ENCODE measurements at regions of chr1 and their contacts with region 1.

Region 1: DNA sequence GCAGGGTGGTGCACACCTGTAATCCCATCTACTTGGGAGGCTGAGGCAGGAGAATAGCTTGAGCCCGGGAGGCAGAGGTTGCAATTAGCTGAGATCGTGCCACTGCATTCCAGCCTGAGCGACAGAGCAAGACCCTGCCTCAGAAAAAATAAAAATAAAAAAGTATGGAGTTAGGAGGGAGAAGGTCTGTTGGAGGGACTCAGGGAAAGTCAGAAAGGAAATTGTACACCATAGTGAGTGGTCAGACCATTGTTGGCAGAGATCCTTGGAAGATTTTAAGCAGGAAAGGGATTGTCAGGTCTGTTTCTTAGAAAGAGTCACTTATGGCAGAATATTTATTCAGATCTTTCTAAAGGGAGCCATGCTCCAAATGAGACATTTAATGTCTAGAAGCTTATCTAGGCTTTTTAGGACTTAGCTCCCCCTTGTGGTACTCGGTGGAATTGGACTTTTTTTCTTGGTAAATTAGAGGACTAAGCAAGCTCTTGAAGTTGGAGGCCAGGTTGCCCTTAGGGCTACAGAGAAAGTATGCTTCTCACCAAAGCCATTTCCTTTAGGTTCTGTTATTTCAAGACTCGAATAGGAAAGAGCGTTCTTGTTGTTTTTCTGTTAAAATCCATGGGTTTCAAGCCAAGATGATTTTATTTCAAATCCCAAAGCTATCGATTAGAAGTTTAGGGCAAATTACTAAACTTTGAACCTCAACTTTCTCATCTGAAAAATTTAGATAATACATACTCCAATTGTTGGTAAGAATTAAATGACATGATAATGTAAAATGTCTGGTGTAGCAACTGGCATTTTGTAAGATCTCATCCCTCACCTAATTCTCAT is 16.5 kb downstream of the MIA3 start:
- DNase-seq: peak; percentile 65
- CTCF ChIP-seq: peak; percentile 80

Region 2: GRCh38 chr1:221777431-221778072 is 856.8 kb before region 1 on chr1:
- CTCF ChIA-PET with region 1: no interaction called
- POLR2A ChIA-PET with region 1: no interaction called
- DNase-seq: peak; percentile 64
- CTCF ChIP-seq: no peak

Region 3: GRCh38 chr1:222314839-222315238 is 319.6 kb before region 1 on chr1:
- CTCF ChIA-PET with region 1: no interaction called
- POLR2A ChIA-PET with region 1: no interaction called
- DNase-seq: no peak
- CTCF ChIP-seq: no peak

Region 4: GRCh38 chr1:222465211-222466041 is 169.0 kb before region 1 on chr1:
- CTCF ChIA-PET with region 1: interaction called, 65 read pairs
- POLR2A ChIA-PET with region 1: no interaction called
- DNase-seq: peak; percentile 90
- CTCF ChIP-seq: peak; percentile 100

Region 5: GRCh38 chr1:222582099-222582774 is 52.2 kb before region 1 on chr1:
- CTCF ChIA-PET with region 1: interaction called, 10 read pairs
- POLR2A ChIA-PET with region 1: no interaction called
- DNase-seq: peak; percentile 11
- CTCF ChIP-seq: no peak

Region 6: DNA sequence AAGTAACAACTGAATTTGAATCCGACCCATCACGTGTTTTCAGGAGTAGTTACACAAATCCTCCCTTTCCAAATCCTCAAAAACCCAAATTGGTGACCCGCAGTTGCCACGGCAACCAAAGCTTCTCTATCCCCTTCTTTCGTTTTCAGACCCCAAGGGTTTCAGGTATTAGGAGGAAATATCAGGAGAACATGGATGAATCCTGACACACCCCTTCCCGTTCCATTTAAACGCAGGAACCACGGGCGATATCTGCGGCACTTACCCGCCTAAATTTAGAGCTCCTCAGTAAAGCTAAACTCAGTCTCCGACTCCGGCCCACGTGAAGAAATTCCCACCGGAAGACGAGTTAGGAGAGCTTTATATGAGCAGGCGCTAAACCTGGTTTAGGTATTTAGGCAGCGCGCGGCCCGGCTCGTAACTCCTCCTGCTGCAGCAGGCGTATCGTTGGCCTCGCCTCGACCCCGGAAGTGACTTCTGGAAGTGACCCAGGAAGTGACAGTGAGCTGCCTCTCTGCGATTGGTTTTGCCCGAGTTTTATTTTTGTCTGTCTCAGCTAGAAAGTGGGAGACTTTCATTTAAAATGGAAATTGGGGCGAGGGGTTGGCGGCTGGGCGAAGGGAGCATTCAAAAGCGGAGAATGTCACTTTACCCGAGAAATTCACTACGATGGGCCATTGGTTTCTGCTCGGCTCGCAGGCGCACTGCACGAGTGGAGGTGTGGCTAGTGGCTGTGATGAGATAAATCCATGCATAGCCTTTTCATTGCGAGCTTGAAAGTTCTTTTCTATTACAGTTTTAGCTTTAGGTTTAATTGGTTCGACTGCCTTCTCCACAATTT is 44.7 kb before region 1 on chr1 and contains the start of gene TAF1A:
- CTCF ChIA-PET with region 1: interaction called, 14 read pairs
- POLR2A ChIA-PET with region 1: no interaction called
- DNase-seq: peak; percentile 88
- CTCF ChIP-seq: no peak

Region 7: DNA sequence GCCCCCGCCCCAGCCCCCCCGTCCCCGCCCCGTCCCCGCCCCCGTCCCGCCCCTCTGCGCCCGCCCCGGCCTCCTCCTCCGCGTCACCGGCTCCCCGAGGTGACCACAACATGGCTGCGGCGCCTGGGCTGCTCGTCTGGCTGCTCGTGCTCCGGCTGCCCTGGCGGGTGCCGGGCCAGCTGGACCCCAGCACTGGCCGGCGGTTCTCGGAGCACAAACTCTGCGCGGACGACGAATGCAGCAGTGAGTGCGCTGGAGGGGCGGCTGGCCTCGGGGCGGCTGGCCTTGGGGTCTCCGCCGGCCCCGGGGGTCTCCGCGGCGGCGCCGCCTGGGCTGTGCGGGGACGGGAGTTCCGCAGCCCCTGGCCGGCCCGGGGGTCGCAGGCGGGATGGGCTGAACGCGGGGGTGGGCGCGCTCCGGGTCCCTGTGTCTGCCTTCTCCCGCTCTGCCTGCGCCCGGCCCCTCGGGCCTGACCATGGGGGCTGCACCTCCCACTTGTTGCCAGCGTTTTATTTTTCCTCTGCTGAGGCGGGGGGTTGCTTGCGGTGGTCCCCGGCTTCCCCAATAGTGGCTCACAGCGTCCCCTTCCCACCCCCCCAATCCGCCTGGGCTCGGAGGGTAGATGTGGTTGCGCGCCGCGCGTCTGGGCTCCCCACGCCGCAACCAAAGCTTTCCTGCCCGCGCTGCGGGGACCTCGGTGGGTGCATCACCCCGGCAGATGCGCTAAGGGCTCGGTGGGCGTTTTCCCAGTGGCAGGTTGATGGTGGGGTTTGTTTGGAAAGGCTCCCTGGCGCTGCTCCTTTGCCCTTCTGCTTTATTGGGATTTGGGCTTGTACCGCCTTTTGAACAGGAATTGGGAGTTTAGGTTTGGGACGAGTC is 16.2 kb before region 1 on chr1 and contains the start of gene MIA3:
- CTCF ChIA-PET with region 1: interaction called, 90 read pairs
- POLR2A ChIA-PET with region 1: no interaction called
- DNase-seq: peak; percentile 93
- CTCF ChIP-seq: no peak

Region 8: GRCh38 chr1:222654849-222655248 is 20.5 kb after region 1 on chr1:
- CTCF ChIA-PET with region 1: interaction called, 14 read pairs
- POLR2A ChIA-PET with region 1: no interaction called
- DNase-seq: peak; percentile 69
- CTCF ChIP-seq: peak; percentile 41

Region 9: DNA sequence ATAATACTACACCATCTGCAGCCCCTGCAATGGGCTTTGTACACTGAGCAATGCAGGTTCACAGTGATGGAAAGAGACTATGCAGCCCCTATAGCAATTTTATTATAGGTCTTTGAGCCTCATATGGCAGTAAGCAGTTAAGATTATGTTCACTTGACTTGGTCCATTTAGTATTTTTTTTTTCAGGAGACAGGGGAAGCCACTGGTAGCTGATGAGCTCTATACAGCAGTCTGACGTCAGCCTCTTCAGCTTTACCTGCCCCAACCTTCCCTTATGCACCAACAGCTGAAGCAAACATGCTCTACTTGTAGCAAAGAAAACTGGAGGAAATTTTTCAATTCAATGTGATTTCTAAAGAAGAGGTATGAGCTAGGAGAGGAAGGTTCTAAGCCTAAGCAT is 45.7 kb after region 1 on chr1:
- CTCF ChIA-PET with region 1: no interaction called
- POLR2A ChIA-PET with region 1: no interaction called
- DNase-seq: no peak
- CTCF ChIP-seq: no peak

Measured in GM10248 (cell line).